HEK293 (cell line): ENCODE measurements at regions of chr17 and their contacts with region 1.

Region 1: GRCh38 chr17:2244545-2245525 is 58.8 kb downstream of the SMG6 start:
- H3K4me3 ChIP-seq: no peak overlapping the region
- H3K27ac ChIP-seq: no peak overlapping the region
- H3K4me1 ChIP-seq: no peaks in the 10 kb centered on the region
- CTCF ChIP-seq: peak; percentile 92

Region 2: GRCh38 chr17:1908699-1909309 is 336.0 kb before region 1 on chr17:
- CTCF ChIA-PET with region 1: interaction called, 45 read pairs
- POLR2A ChIA-PET with region 1: no interaction called
- H3K4me3 ChIP-seq: no peak overlapping the region
- H3K27ac ChIP-seq: no peak overlapping the region
- H3K4me1 ChIP-seq: peaks cover 16% of the 10 kb centered on the region
- CTCF ChIP-seq: peak; percentile 59

Region 3: GRCh38 chr17:2013994-2014317 is 230.9 kb before region 1 on chr17:
- CTCF ChIA-PET with region 1: no interaction called
- POLR2A ChIA-PET with region 1: no interaction called
- H3K4me3 ChIP-seq: no peak overlapping the region
- H3K27ac ChIP-seq: no peak overlapping the region
- H3K4me1 ChIP-seq: no peaks in the 10 kb centered on the region; the same call in 1 of the 2 replicates
- CTCF ChIP-seq: no peak

Region 4: GRCh38 chr17:2054512-2055291 is 190.1 kb before region 1 on chr17 and contains the start of gene HIC1:
- CTCF ChIA-PET with region 1: interaction called, 143 read pairs
- POLR2A ChIA-PET with region 1: interaction called, 11 read pairs
- H3K4me3 ChIP-seq: peak within 1 kb of the TSS; percentile 48
- H3K27ac ChIP-seq: no peak within 1 kb of the TSS; the same call in 1 of the 2 replicates
- H3K4me1 ChIP-seq: peaks cover 5% of the 10 kb centered on the region; the same call in 1 of the 2 replicates
- CTCF ChIP-seq: peak; percentile 78

Region 5: DNA sequence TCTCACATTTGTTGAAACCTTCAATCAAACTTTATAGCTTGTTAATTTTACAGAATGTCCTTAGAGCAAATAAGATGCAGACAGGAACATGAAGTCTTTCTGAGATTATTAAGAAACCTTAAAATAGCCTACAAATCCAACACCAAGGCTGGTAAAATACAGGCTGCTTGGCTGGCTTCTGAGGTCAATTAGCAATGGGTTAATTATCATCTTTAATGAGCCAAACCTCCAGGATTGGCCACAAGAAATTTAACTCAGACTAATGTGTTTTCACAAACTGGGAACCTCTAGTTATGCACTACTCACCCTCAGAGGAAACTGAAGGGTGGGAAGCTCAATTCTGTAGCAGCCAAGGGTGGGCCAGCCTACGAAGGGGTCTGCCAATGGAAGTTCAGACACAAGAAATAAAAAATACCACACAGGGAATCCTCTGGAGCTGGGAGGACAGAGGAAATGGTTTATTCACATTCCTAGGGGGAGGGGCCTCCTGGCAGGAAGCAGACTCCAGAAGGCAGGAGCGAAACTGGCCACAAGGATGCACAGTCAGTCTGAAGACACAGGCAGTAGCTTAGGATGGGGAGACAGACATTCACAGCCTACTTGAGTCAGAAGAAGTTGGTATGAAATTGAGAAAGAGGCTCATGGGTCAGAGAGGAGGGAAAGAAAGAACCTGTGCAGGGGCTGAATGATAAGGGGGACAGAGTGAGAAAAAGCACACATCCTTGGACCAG is 153.9 kb before region 1 on chr17:
- CTCF ChIA-PET with region 1: interaction called, 24 read pairs
- POLR2A ChIA-PET with region 1: interaction called, 4 read pairs
- H3K4me3 ChIP-seq: no peak overlapping the region
- H3K27ac ChIP-seq: no peak overlapping the region
- H3K4me1 ChIP-seq: peaks cover 4% of the 10 kb centered on the region; the same call in 1 of the 2 replicates
- CTCF ChIP-seq: no peak

Region 6: GRCh38 chr17:2222901-2223616 is 21.8 kb before region 1 on chr17:
- CTCF ChIA-PET with region 1: interaction called, 11 read pairs
- POLR2A ChIA-PET with region 1: no interaction called
- H3K4me3 ChIP-seq: no peak overlapping the region
- H3K27ac ChIP-seq: no peak overlapping the region
- H3K4me1 ChIP-seq: peaks cover 3% of the 10 kb centered on the region; the same call in 1 of the 2 replicates
- CTCF ChIP-seq: no peak

Region 7: GRCh38 chr17:2259769-2260536 is 15.1 kb after region 1 on chr17:
- CTCF ChIA-PET with region 1: interaction called, 21 read pairs
- POLR2A ChIA-PET with region 1: no interaction called
- H3K4me3 ChIP-seq: no peak overlapping the region
- H3K27ac ChIP-seq: no peak overlapping the region
- H3K4me1 ChIP-seq: peaks cover 14% of the 10 kb centered on the region
- CTCF ChIP-seq: no peak

Region 8: GRCh38 chr17:2282297-2282873 is 37.5 kb after region 1 on chr17:
- CTCF ChIA-PET with region 1: interaction called, 23 read pairs
- POLR2A ChIA-PET with region 1: no interaction called
- H3K4me3 ChIP-seq: no peak overlapping the region
- H3K27ac ChIP-seq: no peak overlapping the region
- H3K4me1 ChIP-seq: no peaks in the 10 kb centered on the region
- CTCF ChIP-seq: peak; percentile 40; the same call in 1 of the 2 replicates